ENCODE measurements at regions of chr10 and their contacts with region 1.

Region 1: DNA sequence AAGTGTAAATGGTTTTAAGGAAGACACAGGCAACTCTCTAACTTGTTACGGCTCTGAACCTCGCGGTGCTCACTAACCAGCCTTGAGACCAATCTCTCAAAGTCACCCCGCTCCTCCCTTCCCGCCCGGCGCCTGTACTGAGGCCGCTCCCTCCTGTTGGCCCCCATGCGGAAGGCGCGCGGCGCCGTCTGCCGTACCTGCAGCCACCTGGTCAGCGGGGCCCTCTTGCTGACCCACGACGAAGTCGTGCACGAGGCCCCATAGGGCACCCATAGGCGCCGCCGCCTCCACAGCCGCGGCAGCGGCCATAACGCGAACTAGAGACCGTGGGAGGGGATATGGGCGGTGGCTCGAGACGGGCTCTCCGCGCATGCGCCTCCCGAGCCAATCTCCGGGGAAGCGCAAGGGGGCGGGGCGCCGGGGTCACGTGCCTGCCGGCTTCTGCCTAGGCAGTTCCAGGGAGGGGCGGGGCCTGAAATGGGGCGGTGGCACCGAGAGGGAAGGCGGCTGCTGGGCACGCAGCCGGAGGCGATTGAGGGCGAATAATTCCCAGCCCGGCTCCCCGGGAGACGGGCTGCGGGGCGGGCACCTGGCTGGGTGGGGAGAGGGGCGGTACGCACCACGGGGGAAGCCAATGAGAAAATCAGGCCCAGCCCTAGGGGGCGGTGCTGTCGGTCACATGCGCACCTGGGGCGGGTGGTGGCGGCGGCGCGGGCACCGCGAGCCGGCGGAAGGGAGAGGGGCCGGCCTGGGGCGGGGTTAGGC is at the start of gene MMS19:
- DNase-seq: peak; percentile 99
- H3K4me3 Mint-ChIP-seq: peak within 1 kb of the TSS; percentile 87
- H3K27ac Mint-ChIP-seq: peak within 1 kb of the TSS; percentile 94
- H3K4me1 Mint-ChIP-seq: peaks cover 41% of the 10 kb centered on the region
- H3K27me3 Mint-ChIP-seq: peaks cover 21% of the 10 kb centered on the region
- total RNA-seq, gene MMS19: 95.0 to 95.6 TPM

Region 2: DNA sequence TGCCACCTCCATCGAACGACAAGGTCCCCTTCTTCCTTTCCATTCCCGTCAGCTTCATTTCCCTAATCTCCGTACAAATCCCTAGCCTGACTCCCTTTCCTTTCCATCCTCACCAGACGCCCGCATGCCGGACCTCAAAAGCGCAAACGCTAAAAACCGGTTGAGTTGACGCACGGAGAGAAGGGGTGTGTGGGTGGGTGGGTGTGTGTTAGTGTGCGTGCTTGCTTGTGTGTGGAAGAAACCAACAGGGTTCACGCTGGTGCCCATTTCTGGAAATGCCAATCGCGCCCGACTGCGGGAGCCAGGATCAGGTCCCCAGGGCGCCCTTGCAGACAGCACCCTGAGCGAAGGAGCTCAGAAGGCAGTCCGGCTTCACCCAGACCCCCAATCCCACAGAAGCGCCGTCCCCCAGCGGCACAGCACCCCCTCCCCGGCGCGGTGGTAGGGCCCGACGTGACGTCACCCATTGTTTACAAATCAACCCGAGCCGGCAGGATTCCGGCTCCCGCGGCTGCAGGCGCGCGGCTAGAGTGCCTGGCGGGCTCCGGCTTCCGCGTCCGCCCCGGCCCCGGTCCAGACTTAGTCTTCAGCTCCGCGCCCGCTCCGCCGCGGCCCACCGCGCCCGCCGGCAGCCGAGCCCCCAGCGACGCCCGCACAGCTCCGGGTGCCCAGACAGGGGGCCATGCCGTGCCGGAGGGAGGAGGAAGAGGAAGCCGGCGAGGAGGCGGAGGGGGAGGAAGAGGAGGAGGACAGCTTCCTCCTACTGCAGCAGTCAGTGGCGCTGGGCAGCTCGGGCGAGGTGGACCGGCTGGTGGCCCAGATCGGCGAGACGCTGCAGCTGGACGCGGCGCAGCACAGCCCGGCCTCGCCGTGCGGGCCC is 179.2 kb before region 1 on chr10 and contains the start of gene FRAT1:
- CTCF ChIA-PET with region 1: no interaction called
- intact Hi-C with region 1: loop called (anchors 1 kb)
- DNase-seq: peak; percentile 89
- H3K4me3 Mint-ChIP-seq: peak within 1 kb of the TSS; percentile 87
- H3K27ac Mint-ChIP-seq: peak within 1 kb of the TSS; percentile 95
- H3K4me1 Mint-ChIP-seq: peaks cover 23% of the 10 kb centered on the region
- H3K27me3 Mint-ChIP-seq: no peaks in the 10 kb centered on the region
- total RNA-seq, gene FRAT1: 2.3 to 3.0 TPM

Region 3: DNA sequence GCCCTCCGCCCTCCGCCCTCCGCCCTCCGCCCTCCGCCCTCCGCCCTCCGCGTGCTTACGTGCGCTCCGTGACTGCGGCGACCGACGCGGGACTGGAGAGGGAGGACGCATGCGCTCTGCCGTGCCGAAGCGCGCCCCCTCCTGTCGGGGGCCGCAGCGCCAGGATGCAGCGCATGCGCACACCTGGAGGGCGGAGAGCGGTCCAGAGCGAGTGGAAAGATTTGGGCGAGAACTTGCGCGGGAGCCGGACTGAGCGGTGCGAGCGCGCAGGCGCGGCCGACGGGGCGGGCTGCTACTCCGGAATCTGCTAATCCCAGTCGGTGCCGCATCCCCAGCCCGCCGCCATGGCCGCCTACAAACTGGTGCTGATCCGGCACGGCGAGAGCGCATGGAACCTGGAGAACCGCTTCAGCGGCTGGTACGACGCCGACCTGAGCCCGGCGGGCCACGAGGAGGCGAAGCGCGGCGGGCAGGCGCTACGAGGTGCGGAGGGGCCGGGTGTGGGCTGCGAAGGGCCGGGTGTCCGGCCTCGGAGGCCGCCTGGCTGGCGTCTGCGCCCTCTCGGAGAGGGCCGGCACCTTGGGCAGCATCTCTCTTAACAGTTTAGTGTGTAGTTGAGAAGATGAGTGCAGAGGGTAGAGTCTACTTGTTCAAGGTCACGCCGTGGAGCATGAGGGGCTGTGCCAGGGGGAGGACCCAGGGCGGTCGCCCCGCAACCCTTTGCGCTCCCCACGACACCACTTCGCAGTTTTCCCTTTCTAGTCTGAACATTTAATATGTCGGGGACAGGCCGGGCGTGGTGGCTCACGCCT is 72.1 kb before region 1 on chr10 and contains the start of gene PGAM1:
- CTCF ChIA-PET with region 1: interaction called, 3 read pairs
- intact Hi-C with region 1: loop called (anchors 1 kb)
- DNase-seq: peak; percentile 95
- H3K4me3 Mint-ChIP-seq: peak within 1 kb of the TSS; percentile 90
- H3K27ac Mint-ChIP-seq: peak within 1 kb of the TSS; percentile 98
- H3K4me1 Mint-ChIP-seq: peaks cover 50% of the 10 kb centered on the region
- H3K27me3 Mint-ChIP-seq: no peaks in the 10 kb centered on the region
- total RNA-seq, gene PGAM1: 1,371 to 1,393 TPM

Region 4: DNA sequence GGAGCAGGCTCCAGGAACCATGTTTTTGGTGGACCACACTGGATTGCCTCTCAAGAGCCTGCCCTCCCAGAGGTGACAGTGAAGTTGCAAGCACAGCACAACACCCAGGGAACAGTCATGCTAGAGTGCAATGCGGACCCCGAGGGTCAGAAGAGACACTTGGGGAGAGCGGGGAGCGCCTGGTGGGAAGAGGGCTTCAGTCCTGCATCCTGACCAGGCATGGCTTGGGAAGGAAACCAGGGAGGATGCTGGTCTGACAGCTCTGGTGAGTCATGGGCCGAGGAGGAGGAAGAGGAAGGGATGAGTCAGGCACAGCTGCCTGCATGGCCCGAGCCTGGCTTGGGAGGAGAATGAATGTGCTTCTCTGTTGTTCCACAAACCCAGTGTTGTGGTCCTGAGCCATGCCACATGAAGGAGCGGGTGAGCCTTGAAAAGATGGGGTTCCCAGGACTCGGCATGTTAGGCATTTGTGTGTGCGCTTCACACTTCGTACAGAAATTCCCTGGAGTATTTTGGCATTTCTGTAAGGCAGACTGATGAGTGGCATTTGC is 44.8 kb after region 1 on chr10:
- CTCF ChIA-PET with region 1: interaction called, 4 read pairs
- intact Hi-C with region 1: loop called (anchors 1 kb)
- DNase-seq: peak; percentile 86
- H3K4me3 Mint-ChIP-seq: no peak overlapping the region
- H3K27ac Mint-ChIP-seq: peak overlapping the region; percentile 68
- H3K4me1 Mint-ChIP-seq: peaks cover 23% of the 10 kb centered on the region
- H3K27me3 Mint-ChIP-seq: no peaks in the 10 kb centered on the region

Region 5: DNA sequence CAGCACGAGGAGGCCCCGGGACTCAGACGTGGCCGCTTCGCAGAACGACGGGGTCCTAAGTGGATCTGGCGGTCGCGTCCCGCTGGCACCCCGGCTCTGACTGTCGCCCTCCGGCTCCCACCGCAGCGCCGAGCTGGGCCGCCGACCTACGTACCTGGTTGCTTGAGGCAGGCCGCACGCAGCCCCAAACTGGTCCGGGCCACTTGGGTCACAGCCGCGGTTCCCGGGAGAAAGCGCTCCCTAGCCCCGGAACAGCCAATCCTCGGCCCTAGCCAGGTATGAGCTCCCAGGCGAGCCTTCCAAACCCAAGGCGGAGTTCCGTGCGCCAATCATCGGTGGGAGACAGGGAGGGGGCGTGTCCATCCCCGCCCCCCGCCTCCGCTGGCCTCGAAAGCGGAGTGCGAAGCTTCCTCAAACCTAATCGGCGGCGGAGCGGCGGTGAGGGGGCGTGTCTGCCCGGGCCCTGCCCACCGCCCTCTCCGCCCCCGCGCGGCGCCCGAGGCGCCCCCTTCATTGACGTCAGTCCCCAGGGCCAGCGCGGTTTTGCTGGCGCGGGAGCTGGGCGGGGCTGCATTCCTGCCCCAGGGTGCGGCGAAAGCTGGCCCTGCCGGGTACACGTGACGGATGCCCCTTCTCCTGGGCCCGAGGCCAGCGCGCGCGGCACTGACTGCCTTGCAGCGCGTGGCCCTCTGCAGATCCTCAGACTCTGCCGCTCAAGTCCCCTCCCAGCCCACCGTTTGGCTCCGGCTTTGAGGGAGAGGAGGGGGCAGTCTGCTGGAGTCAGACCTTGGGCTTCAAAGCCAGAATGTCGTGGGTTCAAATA is 188.9 kb after region 1 on chr10 and contains the start of gene AVPI1:
- CTCF ChIA-PET with region 1: no interaction called
- intact Hi-C with region 1: loop called (anchors 1 kb)
- DNase-seq: peak; percentile 96
- H3K4me3 Mint-ChIP-seq: peak within 1 kb of the TSS; percentile 81
- H3K27ac Mint-ChIP-seq: no peak within 1 kb of the TSS
- H3K4me1 Mint-ChIP-seq: peaks cover 12% of the 10 kb centered on the region
- H3K27me3 Mint-ChIP-seq: no peaks in the 10 kb centered on the region
- total RNA-seq, gene AVPI1: 1.5 to 1.9 TPM